ENCODE measurements at regions of chr1 and their contacts with region 1.

Region 1: DNA sequence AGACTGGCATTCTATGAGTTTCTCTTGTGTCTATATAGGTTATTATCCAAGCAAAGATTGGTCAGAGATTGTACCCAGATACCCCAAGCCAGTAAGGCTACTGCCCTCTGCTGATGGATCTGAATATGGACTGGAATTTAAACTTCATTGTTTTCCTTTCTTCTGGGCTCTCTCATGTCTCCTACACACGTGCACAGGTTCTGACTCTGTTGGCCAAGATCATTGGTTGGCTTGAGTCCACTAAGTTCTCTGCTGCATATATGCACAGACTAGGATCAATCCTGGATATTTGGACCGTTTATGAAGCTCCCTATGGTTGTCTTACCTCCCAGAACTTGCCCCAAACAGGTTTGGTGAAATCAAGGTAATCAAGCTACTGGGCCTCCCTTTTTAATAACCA is 69.7 kb downstream of the CC2D1B start:
- DNase-seq: peak in 2 of 35 experiments; percentile 4 to 49
- ATAC-seq: peak in 3 of 4 experiments; percentile 48 to 70 (median 57)
- H3K4me3 ChIP-seq: no peak overlapping the region
- H3K4me3 Mint-ChIP-seq: no peak overlapping the region
- H3K27ac ChIP-seq: no peak overlapping the region
- H3K27ac Mint-ChIP-seq: peak overlapping the region in 1 of 2 donors; percentile 44
- H3K4me1 ChIP-seq: no peaks in the 10 kb centered on the region
- H3K4me1 Mint-ChIP-seq: no peaks in the 10 kb centered on the region
- H3K27me3 ChIP-seq: no peaks in the 10 kb centered on the region
- H3K27me3 Mint-ChIP-seq: no peaks in the 10 kb centered on the region

Region 2: DNA sequence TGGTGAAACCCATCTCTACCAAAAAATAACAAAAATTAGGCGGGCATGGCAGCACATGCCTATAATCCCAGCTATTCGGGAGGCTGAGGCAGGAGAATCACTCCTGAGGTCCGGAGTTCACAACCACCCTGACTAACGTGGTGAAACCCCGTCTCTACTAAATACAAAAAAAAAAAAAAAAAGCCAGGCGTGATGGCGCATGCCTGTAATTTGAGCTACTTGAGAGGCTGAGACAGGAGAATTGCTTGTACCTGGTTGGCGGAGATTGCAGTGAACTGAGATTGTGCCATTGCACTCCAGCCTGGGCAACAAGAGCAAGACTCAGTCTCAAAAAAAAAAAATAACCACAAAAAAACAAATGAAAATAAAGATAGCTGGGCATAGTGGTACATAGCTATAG is 27.4 kb after region 1 on chr1:
- CTCF ChIA-PET with region 1: no interaction called
- POLR2A ChIA-PET with region 1: interaction called in 1 of 2 experiments, 14 read pairs
- DNase-seq: no peak
- ATAC-seq: no peak
- H3K4me3 ChIP-seq: no peak overlapping the region
- H3K4me3 Mint-ChIP-seq: no peak overlapping the region
- H3K27ac ChIP-seq: no peak overlapping the region
- H3K27ac Mint-ChIP-seq: no peak overlapping the region
- H3K4me1 ChIP-seq: no peaks in the 10 kb centered on the region
- H3K4me1 Mint-ChIP-seq: no peaks in the 10 kb centered on the region
- H3K27me3 ChIP-seq: no peaks in the 10 kb centered on the region
- H3K27me3 Mint-ChIP-seq: no peaks in the 10 kb centered on the region

Region 3: DNA sequence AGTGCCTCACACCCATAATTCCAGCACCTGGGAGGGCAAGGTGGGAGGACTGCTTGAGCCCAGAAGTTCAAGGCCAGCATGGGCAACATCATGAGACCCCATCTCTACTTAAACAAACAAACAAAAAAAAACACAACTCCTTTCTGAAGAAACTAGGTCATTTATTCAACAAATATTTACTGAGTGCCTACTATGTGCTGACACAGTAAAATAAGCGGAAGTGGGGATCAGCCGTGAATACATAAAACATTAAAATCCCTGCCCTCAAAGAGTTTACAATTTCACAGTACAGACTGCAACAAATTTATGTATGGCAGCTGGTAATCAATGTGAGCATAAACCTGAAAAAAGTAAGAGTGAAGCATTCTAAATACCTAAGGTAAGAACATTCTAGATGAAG is 191.3 kb after region 1 on chr1:
- CTCF ChIA-PET with region 1: no interaction called
- POLR2A ChIA-PET with region 1: no interaction called
- DNase-seq: no peak
- ATAC-seq: no peak
- H3K4me3 ChIP-seq: no peak overlapping the region
- H3K4me3 Mint-ChIP-seq: no peak overlapping the region
- H3K27ac ChIP-seq: no peak overlapping the region
- H3K27ac Mint-ChIP-seq: peak overlapping the region in 1 of 2 donors; percentile 68
- H3K4me1 ChIP-seq: no peaks in the 10 kb centered on the region
- H3K4me1 Mint-ChIP-seq: peaks cover 0 to 3% (median 3%) of the 10 kb centered on the region in 3 donors
- H3K27me3 ChIP-seq: no peaks in the 10 kb centered on the region
- H3K27me3 Mint-ChIP-seq: no peaks in the 10 kb centered on the region

Measured in T-cell (primary cell).